Activated CD4-positive, alpha-beta T cell treated with anti-CD3 and anti-CD28 coated beads, Interleukin-2, amount 10 ng/mL, durations not matched to agents 24 days and 14 days (primary cell): ENCODE measurements at regions of chr13 and their contacts with region 1.

Region 1: GRCh38 chr13:101514788-101515187 is 62.3 kb downstream of the ITGBL1 start:
- DNase-seq: peak; percentile 64
- H3K4me3 Mint-ChIP-seq: no peak overlapping the region
- H3K27ac Mint-ChIP-seq: no peak overlapping the region
- H3K4me1 Mint-ChIP-seq: no peaks in the 10 kb centered on the region
- H3K27me3 Mint-ChIP-seq: peaks cover 14% of the 10 kb centered on the region

Region 2: DNA sequence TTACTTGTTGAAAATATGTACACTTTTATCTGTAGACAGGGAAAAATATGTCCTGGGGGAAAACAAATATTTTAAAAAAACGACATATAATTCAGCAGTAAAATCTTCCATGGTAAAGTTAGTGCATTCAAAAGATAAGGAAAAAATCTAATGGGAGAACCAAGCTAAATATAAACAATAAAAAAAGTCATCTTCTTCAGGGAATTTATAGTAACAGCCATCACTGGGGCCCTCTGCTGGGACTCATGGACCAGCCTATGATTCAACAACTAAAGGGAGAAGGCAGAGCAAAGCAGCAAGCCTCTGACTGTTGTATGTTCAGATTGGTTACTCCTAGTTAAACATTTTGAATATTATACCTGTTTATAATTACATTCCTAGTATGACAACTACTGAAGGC is 30.7 kb after region 1 on chr13:
- intact Hi-C with region 1: no loop called
- DNase-seq: no peak
- H3K4me3 Mint-ChIP-seq: no peak overlapping the region
- H3K27ac Mint-ChIP-seq: no peak overlapping the region
- H3K4me1 Mint-ChIP-seq: no peaks in the 10 kb centered on the region
- H3K27me3 Mint-ChIP-seq: no peaks in the 10 kb centered on the region

Region 3: DNA sequence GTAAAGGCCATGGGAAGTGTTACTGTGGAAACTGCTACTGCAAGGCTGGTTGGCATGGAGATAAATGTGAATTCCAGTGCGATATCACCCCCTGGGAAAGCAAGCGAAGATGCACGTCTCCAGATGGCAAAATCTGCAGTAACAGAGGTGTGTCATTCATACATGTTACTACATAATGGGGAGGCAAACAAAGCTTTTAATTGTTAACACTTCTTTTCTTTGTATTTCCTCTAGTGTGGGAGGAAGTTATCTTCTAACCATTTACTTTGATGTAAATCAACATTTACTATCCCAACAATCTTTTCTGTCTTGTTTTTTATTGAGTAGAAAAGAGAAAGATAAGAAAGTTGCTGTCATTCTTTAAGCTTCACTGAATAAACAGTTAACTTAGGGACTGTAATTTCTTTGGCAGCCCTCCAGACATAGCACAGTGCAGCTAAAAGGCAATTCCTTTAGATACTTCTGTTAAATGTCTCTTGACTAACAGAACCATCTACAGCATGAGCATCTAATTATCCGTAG is 64.6 kb after region 1 on chr13:
- intact Hi-C with region 1: no loop called
- DNase-seq: no peak
- H3K4me3 Mint-ChIP-seq: no peak overlapping the region
- H3K27ac Mint-ChIP-seq: no peak overlapping the region
- H3K4me1 Mint-ChIP-seq: no peaks in the 10 kb centered on the region
- H3K27me3 Mint-ChIP-seq: peaks cover 4% of the 10 kb centered on the region

Region 4: GRCh38 chr13:101757446-101758039 is 242.8 kb after region 1 on chr13:
- intact Hi-C with region 1: loop called (anchors 1 kb)
- DNase-seq: no peak
- H3K4me3 Mint-ChIP-seq: no peak overlapping the region
- H3K27ac Mint-ChIP-seq: no peak overlapping the region
- H3K4me1 Mint-ChIP-seq: no peaks in the 10 kb centered on the region
- H3K27me3 Mint-ChIP-seq: peaks cover 3% of the 10 kb centered on the region

Region 5: DNA sequence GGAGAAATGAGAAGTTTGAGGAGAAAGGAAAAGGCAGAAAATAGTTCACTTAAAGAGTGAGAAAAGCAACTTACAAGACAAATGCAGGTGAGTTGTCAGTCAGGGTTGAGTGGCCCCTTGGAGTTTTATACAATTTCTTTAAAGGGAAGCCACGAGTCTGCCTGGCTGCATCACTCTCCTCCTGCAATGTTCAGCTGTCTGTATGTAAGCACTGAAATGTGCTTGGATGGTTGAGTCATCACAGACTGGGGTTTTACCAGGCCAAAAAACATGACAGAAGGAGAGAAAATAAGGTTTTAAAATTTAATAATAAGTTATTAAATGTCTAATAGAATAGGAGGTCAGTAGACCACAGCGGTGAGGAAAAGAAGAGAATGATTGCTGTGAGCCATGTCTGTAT is 938.0 kb after region 1 on chr13:
- intact Hi-C with region 1: loop called (anchors 10 kb)
- DNase-seq: no peak
- H3K4me3 Mint-ChIP-seq: no peak overlapping the region
- H3K27ac Mint-ChIP-seq: no peak overlapping the region
- H3K4me1 Mint-ChIP-seq: peaks cover 5% of the 10 kb centered on the region
- H3K27me3 Mint-ChIP-seq: peaks cover 5% of the 10 kb centered on the region

Region 6: GRCh38 chr13:103272770-103273169 is 1758.0 kb after region 1 on chr13:
- intact Hi-C with region 1: no loop called
- DNase-seq: no peak
- H3K4me3 Mint-ChIP-seq: no peak overlapping the region
- H3K27ac Mint-ChIP-seq: no peak overlapping the region
- H3K4me1 Mint-ChIP-seq: no peaks in the 10 kb centered on the region
- H3K27me3 Mint-ChIP-seq: no peaks in the 10 kb centered on the region